ENCODE measurements at regions of chr1 and their contacts with region 1.

Region 1: DNA sequence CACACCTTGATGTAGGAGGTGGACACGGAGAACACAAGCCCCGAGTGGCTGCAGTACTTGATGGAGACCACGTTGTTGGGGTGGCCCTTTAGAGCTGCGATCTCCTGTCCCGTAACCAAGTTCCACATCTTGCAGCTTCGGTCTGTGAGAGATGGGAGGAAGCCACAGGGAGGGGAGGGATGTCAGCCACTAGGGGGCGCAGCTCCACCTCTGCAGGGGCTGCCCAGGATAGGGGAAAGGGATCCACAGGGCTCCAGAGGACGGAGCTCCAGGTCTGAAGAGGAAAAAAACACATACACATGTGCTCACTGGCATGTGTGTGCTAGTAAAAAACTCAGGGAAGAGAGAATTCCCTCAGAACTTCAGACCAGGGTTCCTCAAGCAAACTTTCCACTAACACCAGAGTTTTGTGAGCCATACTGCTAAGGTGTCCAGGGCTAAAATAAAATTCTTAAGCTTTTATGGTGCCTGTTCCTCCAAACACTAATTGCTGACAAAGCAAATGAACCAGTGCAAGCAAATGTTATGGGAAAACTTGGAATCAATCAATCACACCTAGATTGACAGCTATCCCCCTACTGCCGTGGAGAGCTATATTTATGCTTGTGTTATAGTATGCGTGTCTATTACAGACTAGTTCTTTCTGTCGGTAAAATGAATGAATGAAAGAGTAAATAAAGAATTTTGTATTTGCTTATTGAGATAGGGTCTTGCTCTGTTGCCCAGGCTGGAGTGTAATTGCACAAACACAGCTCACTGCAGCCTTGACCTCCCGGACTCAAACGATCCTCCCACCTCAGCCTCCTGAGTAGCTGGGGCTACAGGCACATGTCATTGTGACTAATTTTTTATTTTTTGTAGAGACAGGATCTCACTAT is 43.7 kb downstream of the KIF21B start:
- DNase-seq: peak; percentile 90
- ATAC-seq: peak; percentile 97
- H3K4me3 Mint-ChIP-seq: no peak overlapping the region
- H3K27ac Mint-ChIP-seq: no peak overlapping the region
- H3K4me1 Mint-ChIP-seq: no peaks in the 10 kb centered on the region
- H3K27me3 Mint-ChIP-seq: no peaks in the 10 kb centered on the region; the same call in 1 of the 2 replicates
- CTCF ChIP-seq: peak; percentile 87

Region 2: DNA sequence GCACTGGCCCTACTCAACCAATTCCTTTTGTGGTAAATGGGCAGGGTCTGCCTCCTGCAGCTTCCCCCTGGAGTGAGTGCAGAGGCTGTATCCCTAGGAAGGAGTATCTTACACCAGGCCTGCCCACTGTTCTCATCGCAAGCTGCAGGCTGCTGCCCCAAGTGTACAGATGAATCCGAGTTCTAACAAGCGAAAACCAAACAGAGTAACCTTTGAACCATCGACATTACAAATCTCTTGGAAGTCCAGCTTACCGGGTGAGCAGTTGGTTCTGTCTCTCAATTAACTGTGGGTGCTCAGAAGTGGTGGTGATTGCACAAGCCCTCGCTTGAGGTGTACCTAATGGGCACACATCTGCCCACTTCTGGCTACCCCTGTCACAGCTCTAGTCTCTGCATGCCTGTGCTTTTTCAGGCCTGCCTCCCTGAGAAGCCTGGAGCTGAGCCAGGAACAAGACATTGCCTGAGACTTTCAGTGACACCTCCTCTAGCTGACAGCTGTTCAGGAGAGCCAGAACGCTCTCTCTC is 62.5 kb before region 1 on chr1:
- CTCF ChIA-PET with region 1: interaction called, 15 read pairs
- POLR2A ChIA-PET with region 1: no interaction called
- DNase-seq: no peak
- ATAC-seq: no peak
- H3K4me3 Mint-ChIP-seq: no peak overlapping the region
- H3K27ac Mint-ChIP-seq: no peak overlapping the region
- H3K4me1 Mint-ChIP-seq: peaks cover 5% of the 10 kb centered on the region; the same call in 1 of the 2 replicates
- H3K27me3 Mint-ChIP-seq: no peaks in the 10 kb centered on the region
- CTCF ChIP-seq: no peak

Region 3: GRCh38 chr1:200999667-201000066 is 19.9 kb after region 1 on chr1:
- CTCF ChIA-PET with region 1: interaction called, 14 read pairs
- POLR2A ChIA-PET with region 1: no interaction called
- DNase-seq: no peak
- ATAC-seq: no peak
- H3K4me3 Mint-ChIP-seq: no peak overlapping the region
- H3K27ac Mint-ChIP-seq: no peak overlapping the region
- H3K4me1 Mint-ChIP-seq: no peaks in the 10 kb centered on the region
- H3K27me3 Mint-ChIP-seq: no peaks in the 10 kb centered on the region
- CTCF ChIP-seq: no peak

Region 4: DNA sequence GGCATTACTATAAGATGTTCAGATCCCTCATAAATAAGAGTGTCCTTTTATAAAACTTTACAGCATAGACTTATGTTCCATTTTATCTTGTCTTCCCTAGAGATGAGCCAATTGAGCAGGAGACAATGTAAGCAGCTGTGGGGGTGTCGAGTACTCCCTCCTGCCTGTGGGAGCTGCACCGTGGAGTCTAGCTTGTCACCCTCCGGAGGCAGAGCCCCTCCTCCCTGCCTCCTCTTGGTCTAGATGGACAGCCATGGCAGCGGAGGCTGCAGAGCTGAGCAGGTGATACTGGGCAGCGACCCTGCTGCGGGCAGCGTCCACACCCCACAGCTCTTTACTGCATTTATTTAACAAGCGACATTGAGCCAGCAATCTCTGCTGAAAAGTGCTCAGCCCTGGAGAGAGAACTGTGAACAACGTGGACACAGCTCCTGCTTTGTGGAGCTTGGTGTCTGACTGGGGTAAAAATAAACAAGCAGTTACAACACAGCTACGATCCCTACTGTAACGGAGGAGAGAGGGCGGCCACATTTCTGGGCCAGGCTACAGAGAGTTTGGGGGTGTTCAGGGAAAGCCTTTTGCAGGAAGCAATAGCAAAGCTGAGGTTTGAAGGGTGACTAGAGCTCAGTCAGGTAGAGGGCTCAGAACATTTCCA is 56.5 kb after region 1 on chr1:
- CTCF ChIA-PET with region 1: interaction called, 153 read pairs
- POLR2A ChIA-PET with region 1: no interaction called
- DNase-seq: no peak
- ATAC-seq: no peak
- H3K4me3 Mint-ChIP-seq: no peak overlapping the region
- H3K27ac Mint-ChIP-seq: no peak overlapping the region
- H3K4me1 Mint-ChIP-seq: no peaks in the 10 kb centered on the region
- H3K27me3 Mint-ChIP-seq: no peaks in the 10 kb centered on the region
- CTCF ChIP-seq: no peak

Region 5: GRCh38 chr1:201085916-201086735 is 106.3 kb after region 1 on chr1:
- CTCF ChIA-PET with region 1: interaction called, 17 read pairs
- POLR2A ChIA-PET with region 1: no interaction called
- DNase-seq: peak; percentile 76
- ATAC-seq: peak; percentile 97
- H3K4me3 Mint-ChIP-seq: no peak overlapping the region
- H3K27ac Mint-ChIP-seq: no peak overlapping the region
- H3K4me1 Mint-ChIP-seq: peaks cover 6% of the 10 kb centered on the region; the same call in 1 of the 2 replicates
- H3K27me3 Mint-ChIP-seq: no peaks in the 10 kb centered on the region
- CTCF ChIP-seq: peak; percentile 35; the same call in 1 of the 2 replicates

Region 6: DNA sequence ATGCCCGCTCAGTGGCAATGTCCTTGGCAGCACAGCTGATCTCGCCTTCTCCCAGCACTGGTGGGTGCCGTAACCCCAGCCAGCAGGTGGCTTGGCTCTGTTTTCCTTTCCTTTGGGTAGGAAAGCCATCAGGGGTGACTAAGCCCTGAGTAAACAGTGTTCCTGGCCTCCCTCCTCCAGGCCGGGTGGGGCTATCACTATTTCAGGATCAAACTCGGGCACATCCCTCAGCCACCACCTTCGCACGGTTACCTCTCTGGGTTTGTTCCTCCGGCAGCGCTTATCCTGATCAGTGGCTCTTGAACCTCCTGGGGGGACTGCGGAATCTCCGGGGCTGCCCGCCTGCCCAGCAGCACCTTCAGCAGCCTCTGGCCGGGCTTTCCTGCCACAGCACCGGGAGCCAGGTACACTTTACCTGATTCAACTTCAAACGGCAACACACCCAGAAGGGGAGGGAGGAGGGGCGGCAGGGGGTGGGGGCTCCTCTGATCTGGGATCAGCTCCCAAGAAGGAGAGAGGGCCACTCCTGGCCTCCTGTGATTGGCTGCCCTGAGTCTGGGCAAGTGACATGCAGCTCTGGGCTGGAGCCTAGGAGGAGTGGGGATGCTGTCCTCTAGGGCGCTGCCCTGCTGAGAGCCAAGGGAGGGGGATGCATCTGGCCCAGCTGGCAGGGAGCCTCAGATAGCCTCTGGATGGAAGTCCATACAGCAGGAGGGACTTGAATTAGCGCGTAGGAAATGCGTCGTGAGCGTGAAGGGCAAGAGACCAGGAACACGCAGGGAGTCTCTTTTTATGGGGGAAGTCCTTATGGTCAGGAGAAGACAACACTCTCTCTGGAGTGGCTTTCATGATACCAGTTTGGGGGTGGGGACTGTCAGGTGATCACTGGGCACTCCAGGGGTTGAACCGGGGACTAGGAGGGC is 147.3 kb after region 1 on chr1 and contains the start of gene ASCL5:
- CTCF ChIA-PET with region 1: interaction called, 10 read pairs
- POLR2A ChIA-PET with region 1: no interaction called
- DNase-seq: peak; percentile 57
- ATAC-seq: peak; percentile 92
- H3K4me3 Mint-ChIP-seq: no peak within 1 kb of the TSS
- H3K27ac Mint-ChIP-seq: no peak within 1 kb of the TSS
- H3K4me1 Mint-ChIP-seq: peaks cover 10% of the 10 kb centered on the region
- H3K27me3 Mint-ChIP-seq: peaks cover 2% of the 10 kb centered on the region; the same call in 1 of the 2 replicates
- CTCF ChIP-seq: no peak
- total RNA-seq, gene ASCL5: 0.18 to 0.53 TPM (median 0.31 TPM) in 3 replicates